ENCODE measurements at regions of chr12 and their contacts with region 1.

Region 1: GRCh38 chr12:57896434-57897201 is 44.7 kb upstream of the ATP23 start:
- DNase-seq: peak; percentile 76 to 81
- ATAC-seq: peak; percentile 38 to 57
- H3K4me3 ChIP-seq: peak overlapping the region; percentile 65 to 81 (median 67)
- H3K27ac ChIP-seq: peak overlapping the region; percentile 90 to 96 (median 92)
- H3K4me1 ChIP-seq: peaks cover 64 to 69% of the 10 kb centered on the region in 2 donors
- H3K27me3 ChIP-seq: no peaks in the 10 kb centered on the region
- CTCF ChIP-seq: peak; percentile 34 to 70 (median 41)
- POLR2A ChIP-seq: peak; percentile 57 to 80

Region 2: GRCh38 chr12:57829025-57829777 is 67.4 kb before region 1 on chr12:
- in situ Hi-C with region 1: no loop called
- intact Hi-C with region 1: loop called (anchors 2 kb)
- DNase-seq: no peak
- ATAC-seq: no peak
- H3K4me3 ChIP-seq: no peak overlapping the region
- H3K27ac ChIP-seq: peak overlapping the region; percentile 93 to 99 (median 98)
- H3K4me1 ChIP-seq: peaks cover 52 to 59% of the 10 kb centered on the region in 2 donors
- H3K27me3 ChIP-seq: no peaks in the 10 kb centered on the region
- CTCF ChIP-seq: no peak
- POLR2A ChIP-seq: no peak

Region 3: DNA sequence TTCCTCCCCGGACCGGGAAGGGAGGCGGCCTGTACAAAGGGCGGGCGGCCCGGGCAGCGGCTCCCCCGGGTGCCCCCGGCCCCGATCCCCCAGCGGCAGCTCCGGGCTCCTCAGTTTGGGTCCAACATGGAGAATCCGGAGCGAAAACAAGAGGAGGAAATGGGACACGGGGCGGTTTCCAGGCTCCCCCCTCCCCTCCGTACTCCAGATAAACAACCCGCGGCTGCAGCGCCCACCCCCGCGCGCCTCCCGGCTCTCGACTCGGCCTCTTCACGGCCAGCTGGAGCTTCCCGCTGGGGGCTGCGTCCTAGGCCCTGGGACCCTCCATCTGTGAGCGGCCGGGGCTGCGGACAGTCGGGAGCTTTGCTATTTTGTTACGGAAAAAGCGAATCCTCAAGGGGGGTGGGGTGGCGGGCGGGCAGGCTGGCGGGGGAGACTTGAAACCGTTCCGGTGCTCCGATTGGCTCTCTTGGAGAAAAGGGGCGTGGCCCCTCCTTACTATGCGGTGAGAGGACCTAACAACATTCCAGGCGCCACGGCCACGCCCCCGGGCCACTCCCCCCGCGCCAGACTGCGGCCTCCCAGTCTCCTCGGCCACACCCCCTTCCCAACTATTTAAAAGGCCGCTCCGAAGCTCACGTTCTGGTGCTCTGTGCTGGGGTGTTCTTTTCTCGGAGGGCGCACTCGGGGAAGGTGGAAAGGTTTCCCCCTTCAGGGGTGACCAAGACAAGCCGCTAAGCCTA is 49.9 kb before region 1 on chr12 and contains the start of gene CTDSP2:
- in situ Hi-C with region 1: no loop called
- intact Hi-C with region 1: loop called (anchors 2 kb)
- DNase-seq: peak; percentile 100
- ATAC-seq: peak; percentile 58 to 60
- H3K4me3 ChIP-seq: peak within 1 kb of the TSS; percentile 82 to 98 (median 96)
- H3K27ac ChIP-seq: peak within 1 kb of the TSS; percentile 93 to 99 (median 98)
- H3K4me1 ChIP-seq: peaks cover 69% of the 10 kb centered on the region in 2 donors
- H3K27me3 ChIP-seq: no peaks in the 10 kb centered on the region
- CTCF ChIP-seq: peak in 1 of 5 experiments; percentile 24
- POLR2A ChIP-seq: peak; percentile 82 to 98
- total RNA-seq, gene CTDSP2: 66.0 to 116 (median 83.4) TPM

Region 4: DNA sequence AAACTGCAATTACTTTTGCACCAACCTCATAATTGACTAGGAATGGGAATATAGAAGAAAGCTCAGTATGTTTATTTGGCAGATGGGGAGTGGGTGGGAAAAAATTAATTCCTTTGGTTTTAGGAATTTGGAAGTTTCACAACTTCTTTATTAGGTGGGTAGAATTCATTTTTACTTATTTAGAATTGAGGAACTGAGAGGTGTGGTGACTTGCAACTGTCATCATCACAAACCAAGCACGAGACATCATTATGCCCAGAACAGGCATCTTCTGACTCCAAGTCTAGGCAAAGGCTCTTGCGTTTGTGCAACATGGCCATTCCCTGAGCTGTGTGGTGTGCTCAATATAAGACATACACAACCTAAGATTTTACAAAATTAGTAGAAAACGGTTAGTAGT is 424.8 kb after region 1 on chr12:
- in situ Hi-C with region 1: no loop called
- intact Hi-C with region 1: no loop called
- DNase-seq: no peak
- ATAC-seq: no peak
- H3K4me3 ChIP-seq: no peak overlapping the region
- H3K27ac ChIP-seq: no peak overlapping the region
- H3K4me1 ChIP-seq: no peaks in the 10 kb centered on the region
- H3K27me3 ChIP-seq: no peaks in the 10 kb centered on the region
- CTCF ChIP-seq: no peak
- POLR2A ChIP-seq: no peak